ENCODE measurements at regions of chr12 and their contacts with region 1.

Region 1: GRCh38 chr12:69039894-69040293 is 106.9 kb upstream of the CPM start:
- DNase-seq: no peak

Region 2: GRCh38 chr12:68786929-68787328 is 253.0 kb before region 1 on chr12:
- in situ Hi-C with region 1: no loop called
- DNase-seq: no peak

Region 3: GRCh38 chr12:68943848-68944247 is 96.0 kb before region 1 on chr12:
- in situ Hi-C with region 1: loop called (anchors 10 kb)
- DNase-seq: peak; percentile 67

Region 4: GRCh38 chr12:68962875-68963855 is 76.7 kb before region 1 on chr12:
- in situ Hi-C with region 1: loop called (anchors 10 kb)
- DNase-seq: no peak

Region 5: GRCh38 chr12:69115951-69116350 is 76.1 kb after region 1 on chr12:
- in situ Hi-C with region 1: no loop called
- DNase-seq: no peak